ENCODE measurements at regions of chr3 and their contacts with region 1.

Region 1: GRCh38 chr3:14548321-14548729 is 8.2 kb upstream of the GRIP2 start:
- DNase-seq: no peak
- H3K4me3 ChIP-seq: no peak overlapping the region
- H3K27me3 ChIP-seq: peaks cover 7% of the 10 kb centered on the region
- CTCF ChIP-seq: peak; percentile 84

Region 2: DNA sequence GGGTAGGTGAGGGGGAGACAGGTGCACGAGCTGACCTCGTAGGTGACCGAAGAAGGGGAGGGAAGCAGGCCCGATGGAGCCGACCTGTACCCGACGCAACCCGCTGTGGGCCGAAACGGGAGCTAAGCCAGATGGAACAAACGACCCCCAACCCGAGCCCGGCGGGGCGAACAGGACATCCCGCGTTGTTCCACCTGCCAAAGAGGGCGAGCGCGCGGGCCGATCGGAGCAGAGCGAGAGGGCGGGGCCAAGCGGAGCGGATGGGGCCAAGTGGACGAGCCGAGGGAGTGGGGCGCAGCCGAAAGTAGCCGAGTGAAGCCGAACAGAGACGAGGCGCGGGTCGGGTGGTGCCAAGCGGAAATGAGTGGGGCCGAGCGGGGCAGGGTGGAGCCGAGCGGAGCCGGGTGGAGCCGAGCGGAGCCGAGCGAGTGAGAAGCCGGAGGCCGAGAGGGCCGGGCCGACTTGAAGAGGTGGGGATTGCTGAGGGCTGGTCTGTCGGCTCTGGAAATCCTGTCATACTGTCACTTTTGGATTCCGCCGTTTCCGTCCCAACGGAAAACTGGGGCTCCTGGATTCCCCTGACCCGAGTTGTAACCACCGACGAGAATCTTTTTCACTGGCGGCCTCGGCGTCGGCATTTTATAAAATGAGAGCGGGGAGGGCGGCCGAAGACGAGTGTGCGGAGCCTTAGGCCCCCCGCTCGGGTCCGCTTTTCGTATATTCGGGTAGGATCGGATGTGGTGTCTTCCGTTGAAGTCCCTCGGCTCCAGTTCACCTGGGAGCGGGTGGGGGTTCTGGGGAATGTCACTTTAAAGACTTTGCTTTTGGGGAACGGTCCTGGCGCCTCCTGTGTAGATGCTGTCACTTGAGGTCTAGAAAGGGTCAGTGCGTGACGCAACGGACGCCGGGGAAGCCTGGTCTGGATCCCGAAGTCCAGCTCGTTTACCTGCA is 652.9 kb before region 1 on chr3:
- CTCF ChIA-PET with region 1: interaction called, 19 read pairs
- POLR2A ChIA-PET with region 1: no interaction called
- DNase-seq: peak; percentile 65
- H3K4me3 ChIP-seq: peak overlapping the region; percentile 63
- H3K27me3 ChIP-seq: no peaks in the 10 kb centered on the region; the same call in 1 of the 2 replicates
- CTCF ChIP-seq: no peak

Region 3: DNA sequence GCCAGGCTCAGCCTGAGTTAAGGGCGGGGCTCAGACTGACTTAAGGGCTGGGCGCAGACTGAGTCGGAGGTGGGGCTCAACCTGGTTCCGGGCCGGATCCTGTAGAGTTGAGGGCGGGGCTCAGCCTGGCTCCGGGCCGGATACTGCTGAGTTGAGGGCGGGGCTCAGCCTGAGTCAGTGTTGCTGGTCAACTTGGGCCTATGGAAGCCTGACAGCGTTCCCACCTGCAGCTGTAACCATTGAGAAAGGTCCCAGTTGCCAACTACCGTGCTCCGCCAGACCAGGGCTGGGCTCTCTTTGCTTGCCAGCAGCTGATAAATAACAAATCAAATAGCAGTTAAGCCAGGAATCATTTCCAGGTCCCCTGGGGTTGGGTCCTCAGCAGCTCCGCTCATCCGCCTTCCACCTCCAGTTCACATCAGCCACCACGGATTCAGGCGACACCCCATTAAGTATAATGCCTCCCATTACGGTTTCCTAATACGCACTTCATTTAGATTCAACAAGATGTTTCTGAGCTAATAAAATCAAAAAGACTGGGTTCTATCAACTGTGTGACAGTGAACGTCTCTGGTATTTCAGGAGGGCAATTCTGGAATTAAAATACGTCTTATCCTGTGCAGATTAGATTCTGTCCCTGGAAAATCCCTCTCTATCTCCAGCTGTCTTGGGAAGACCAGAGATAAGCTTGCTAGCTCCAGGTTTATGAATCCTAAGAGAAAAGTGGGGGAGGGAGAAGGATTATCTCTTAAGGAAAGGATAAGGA is 15.5 kb before region 1 on chr3:
- CTCF ChIA-PET with region 1: interaction called, 19 read pairs
- POLR2A ChIA-PET with region 1: no interaction called
- DNase-seq: no peak
- H3K4me3 ChIP-seq: no peak overlapping the region
- H3K27me3 ChIP-seq: peaks cover 4% of the 10 kb centered on the region; the same call in 1 of the 2 replicates
- CTCF ChIP-seq: no peak

Region 4: GRCh38 chr3:14561051-14561960 is 13.0 kb after region 1 on chr3:
- CTCF ChIA-PET with region 1: interaction called, 14 read pairs
- POLR2A ChIA-PET with region 1: no interaction called
- DNase-seq: no peak
- H3K4me3 ChIP-seq: no peak overlapping the region
- H3K27me3 ChIP-seq: peaks cover 7% of the 10 kb centered on the region
- CTCF ChIP-seq: no peak